Dorsolateral prefrontal cortex (tissue), 120 donors: ENCODE measurements at regions of chr4 and their contacts with region 1.

Region 1: GRCh38 chr4:160142579-160142978 is 1039.7 kb downstream of the RAPGEF2 start:
- DNase-seq: no peak
- H3K4me3 ChIP-seq: no peak overlapping the region
- H3K27ac ChIP-seq: no peak overlapping the region
- H3K27me3 ChIP-seq: no peaks in the 10 kb centered on the region
- CTCF ChIP-seq: no peak

Region 2: DNA sequence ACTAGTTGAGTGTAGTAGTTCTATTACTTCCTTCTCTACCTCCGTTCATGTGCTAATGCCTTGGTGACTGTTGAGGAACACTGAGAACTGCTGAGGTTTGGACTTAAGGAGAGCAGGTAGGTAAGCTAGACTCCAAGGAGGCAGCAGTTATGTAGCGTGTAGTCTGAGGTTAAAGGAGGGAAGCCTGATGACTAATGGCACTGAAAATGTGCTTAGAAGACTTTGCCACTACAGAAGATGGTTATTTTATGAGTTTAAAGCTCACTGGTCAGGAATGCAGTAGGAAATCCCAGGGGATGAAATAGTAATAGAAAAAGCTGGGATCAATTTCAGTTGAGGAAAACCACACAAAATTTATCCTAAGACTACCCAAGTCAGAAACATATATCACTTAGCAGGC is 37.6 kb after region 1 on chr4:
- intact Hi-C with region 1: no loop called
- DNase-seq: no peak
- H3K4me3 ChIP-seq: no peak overlapping the region
- H3K27ac ChIP-seq: no peak overlapping the region
- H3K27me3 ChIP-seq: no peaks in the 10 kb centered on the region
- CTCF ChIP-seq: no peak

Region 3: GRCh38 chr4:160353548-160353947 is 211.0 kb after region 1 on chr4:
- intact Hi-C with region 1: loop called in 1 of 2 experiments (anchors 10 kb)
- DNase-seq: peak in 1 of 10 donors; percentile 53
- H3K4me3 ChIP-seq: no peak overlapping the region
- H3K27ac ChIP-seq: peak overlapping the region in 2 of 59 donors; percentile 10 to 49
- H3K27me3 ChIP-seq: peaks cover 0 to 6% (median 0%) of the 10 kb centered on the region in 45 donors
- CTCF ChIP-seq: no peak